Mammary epithelial cell (primary cell): ENCODE measurements at regions of chr15 and their contacts with region 1.

Region 1: DNA sequence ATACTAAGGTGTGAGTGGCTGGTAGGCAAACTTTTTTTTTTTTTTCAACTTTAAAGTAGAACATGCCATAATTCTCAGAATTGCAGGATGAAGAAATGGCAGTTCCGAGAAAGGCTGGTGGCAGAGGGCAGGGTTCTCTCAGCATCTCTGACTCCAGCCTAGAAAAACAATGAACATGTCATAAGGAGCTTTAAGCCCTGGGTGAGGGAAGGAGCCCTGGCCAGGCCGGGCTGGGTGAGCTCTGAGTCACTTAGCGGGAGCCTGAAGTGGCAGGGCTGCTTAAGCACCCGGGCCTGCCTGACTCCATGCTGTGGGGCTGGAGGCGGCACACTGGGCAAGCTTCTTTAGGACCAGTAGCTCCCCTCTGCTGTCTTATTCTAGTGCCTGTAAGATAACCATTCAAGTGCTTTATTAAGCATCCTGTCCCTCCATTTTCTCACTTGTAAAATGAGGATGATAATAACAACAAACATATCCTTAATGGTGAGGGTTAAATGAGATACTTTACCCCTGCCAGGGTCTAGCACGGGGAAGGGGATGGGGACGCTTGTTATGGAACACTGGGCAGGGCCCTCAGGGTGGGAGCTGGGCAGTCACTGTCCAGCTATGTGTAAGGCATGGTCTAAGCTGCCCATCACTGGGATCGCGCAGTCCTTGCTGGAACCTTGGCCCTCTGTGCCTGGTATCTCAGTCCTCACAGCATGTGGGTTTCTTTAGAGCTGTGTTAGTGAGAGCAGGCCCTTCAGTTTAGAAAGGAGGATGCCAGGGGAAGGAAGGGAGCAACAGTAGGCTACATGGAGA is 18.4 kb downstream of the SMAD6 start:
- DNase-seq: peak; percentile 66
- H3K4me3 ChIP-seq: no peak overlapping the region
- H3K27ac ChIP-seq: no peak overlapping the region
- H3K4me1 ChIP-seq: peaks cover 13% of the 10 kb centered on the region
- H3K27me3 ChIP-seq: no peaks in the 10 kb centered on the region
- CTCF ChIP-seq: no peak

Region 2: DNA sequence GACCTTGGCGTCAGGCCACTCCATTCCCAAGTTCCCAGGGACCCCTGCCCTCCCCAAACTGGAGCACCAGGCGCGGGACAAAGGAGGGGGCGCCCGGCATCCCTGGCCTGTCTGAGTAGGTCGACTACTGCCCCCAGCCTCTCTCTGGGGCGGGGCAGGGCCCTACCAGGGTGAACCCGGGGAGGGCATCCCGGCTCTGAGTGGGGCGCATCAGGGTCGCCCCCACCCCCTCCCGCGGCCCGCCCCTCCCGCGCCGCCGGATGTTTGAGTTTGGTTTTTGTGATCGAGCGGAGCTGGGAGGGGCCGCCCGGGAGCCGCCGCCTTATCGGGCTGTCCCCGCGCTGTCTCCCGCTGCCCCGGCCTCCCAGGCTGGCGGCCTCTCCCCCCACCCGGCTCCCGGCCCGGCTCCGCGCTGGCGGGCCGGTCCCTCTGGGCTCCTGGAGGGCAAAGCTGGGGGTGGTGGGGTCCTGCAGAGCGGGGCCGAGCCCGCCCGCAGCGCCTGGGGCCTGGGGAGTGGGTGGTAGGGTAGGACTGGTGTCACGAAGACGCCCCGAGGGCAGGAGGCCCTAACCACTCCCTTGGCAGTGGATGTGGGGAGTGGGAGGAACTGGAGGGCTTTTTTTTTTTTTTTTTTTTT is 65.5 kb before region 1 on chr15:
- CTCF ChIA-PET with region 1: no interaction called
- dilution Hi-C with region 1: loop called (anchors 5 kb)
- in situ Hi-C with region 1: no loop called
- intact Hi-C with region 1: no loop called
- DNase-seq: no peak
- H3K4me3 ChIP-seq: no peak overlapping the region
- H3K27ac ChIP-seq: no peak overlapping the region
- H3K4me1 ChIP-seq: no peaks in the 10 kb centered on the region
- H3K27me3 ChIP-seq: peaks cover 2% of the 10 kb centered on the region
- CTCF ChIP-seq: no peak

Region 3: DNA sequence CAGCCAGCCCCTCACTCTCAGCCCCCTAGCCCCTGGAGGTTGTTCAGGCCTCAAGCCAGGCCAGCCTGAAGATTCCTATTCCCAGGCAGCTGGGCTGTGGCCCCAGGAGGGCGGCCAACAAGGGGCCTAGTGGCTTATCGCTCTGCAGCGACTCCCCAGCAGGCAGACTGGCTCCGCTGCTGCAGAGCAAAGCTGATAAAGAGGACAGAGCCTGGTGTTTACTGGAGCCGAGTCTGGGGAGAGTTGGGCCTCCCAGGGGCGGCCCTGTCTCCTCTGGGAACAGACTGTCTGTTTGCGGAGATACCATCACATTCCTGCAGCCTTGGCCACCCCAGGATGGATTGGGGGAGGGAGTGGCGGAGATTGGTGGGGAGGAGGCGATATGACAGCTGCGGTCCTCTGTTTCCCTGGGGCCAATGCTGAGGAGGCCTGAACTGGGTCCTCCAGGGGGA is 40.7 kb before region 1 on chr15:
- CTCF ChIA-PET with region 1: no interaction called
- dilution Hi-C with region 1: loop called (anchors 5 kb)
- in situ Hi-C with region 1: no loop called
- intact Hi-C with region 1: no loop called
- DNase-seq: no peak
- H3K4me3 ChIP-seq: no peak overlapping the region
- H3K27ac ChIP-seq: no peak overlapping the region
- H3K4me1 ChIP-seq: no peaks in the 10 kb centered on the region
- H3K27me3 ChIP-seq: no peaks in the 10 kb centered on the region
- CTCF ChIP-seq: no peak

Region 4: GRCh38 chr15:66756295-66756694 is 35.9 kb after region 1 on chr15:
- CTCF ChIA-PET with region 1: no interaction called
- dilution Hi-C with region 1: loop called (anchors 5 kb)
- in situ Hi-C with region 1: no loop called
- intact Hi-C with region 1: no loop called
- DNase-seq: no peak
- H3K4me3 ChIP-seq: no peak overlapping the region
- H3K27ac ChIP-seq: no peak overlapping the region
- H3K4me1 ChIP-seq: peaks cover 16% of the 10 kb centered on the region
- H3K27me3 ChIP-seq: no peaks in the 10 kb centered on the region
- CTCF ChIP-seq: no peak